ENCODE measurements at regions of chr21 and their contacts with region 1.

Region 1: GRCh38 chr21:15729674-15730483 is at the start of gene USP25:
- DNase-seq: peak; percentile 93 to 97
- ATAC-seq: peak; percentile 93 to 97 (median 96)
- H3K4me3 ChIP-seq: peak within 1 kb of the TSS; percentile 93
- H3K27ac ChIP-seq: peak within 1 kb of the TSS; percentile 97
- H3K4me1 ChIP-seq: peaks cover 13% of the 10 kb centered on the region
- H3K27me3 ChIP-seq: no peaks in the 10 kb centered on the region
- CTCF ChIP-seq: peak; percentile 28
- total RNA-seq, gene USP25: 104 to 149 (median 116) TPM

Region 2: DNA sequence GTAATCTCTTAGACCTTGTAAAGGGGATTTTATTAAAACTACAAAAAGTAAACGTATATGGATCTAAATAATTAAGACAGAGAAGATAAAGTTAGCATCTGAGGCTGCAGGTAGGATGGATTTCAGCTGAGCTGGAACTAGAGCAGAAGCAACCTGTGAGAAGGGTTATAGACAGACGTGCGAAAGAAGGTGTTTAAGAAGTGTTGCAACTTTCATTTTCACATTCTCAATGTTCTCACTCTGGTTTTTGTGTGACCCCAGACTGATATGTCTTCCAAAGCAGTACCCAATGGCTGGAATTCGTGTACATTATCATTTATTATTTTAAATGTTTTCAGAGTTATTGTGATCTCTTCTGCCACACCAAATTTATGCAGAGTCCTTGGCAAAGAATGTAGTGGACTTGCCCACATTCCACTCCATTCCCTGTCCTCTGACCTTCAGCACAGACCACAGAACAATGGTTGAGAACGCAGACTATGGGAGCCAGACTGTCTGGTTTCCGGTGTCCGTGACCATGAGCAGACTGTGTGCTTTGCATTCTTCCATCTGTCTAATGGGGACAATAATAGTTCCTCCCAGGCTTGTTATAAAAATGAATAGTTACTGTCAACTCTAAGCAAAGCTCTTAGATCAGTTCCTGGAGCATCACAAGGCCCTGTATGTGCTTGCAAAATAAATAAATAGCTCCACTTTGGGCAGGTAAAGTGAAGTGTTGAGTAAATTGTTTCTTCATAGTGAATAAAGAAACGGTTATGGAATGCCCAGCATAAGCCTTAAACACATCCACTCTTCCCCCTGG is 1043.2 kb before region 1 on chr21:
- intact Hi-C with region 1: no loop called
- DNase-seq: no peak
- ATAC-seq: no peak
- H3K4me3 ChIP-seq: no peak overlapping the region
- H3K27ac ChIP-seq: no peak overlapping the region
- H3K4me1 ChIP-seq: no peaks in the 10 kb centered on the region
- H3K27me3 ChIP-seq: no peaks in the 10 kb centered on the region
- CTCF ChIP-seq: no peak

Region 3: DNA sequence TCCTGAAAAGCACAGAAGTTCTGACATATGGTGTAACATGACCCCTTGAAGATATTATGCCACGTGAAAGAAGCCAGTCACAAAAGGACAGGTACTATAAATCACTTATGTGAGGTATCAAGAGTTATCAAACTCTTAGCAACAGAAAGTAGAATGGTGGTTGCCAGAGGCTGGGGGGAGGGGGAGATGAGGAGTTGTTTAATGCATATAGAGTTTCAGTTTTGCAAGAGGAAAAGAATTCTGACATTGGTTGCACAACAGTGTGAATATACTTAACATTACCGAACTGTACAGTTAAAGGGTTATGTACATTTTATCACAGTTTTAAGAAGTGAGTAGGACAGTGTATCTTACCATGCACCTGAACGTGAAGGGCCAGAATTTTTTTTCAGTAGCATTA is 79.9 kb after region 1 on chr21:
- intact Hi-C with region 1: loop called in 1 of 2 experiments (anchors 5 kb)
- DNase-seq: peak; percentile 16 to 57
- ATAC-seq: peak; percentile 58 to 67 (median 62)
- H3K4me3 ChIP-seq: peak overlapping the region; percentile 42
- H3K27ac ChIP-seq: peak overlapping the region; percentile 72
- H3K4me1 ChIP-seq: peaks cover 31% of the 10 kb centered on the region
- H3K27me3 ChIP-seq: no peaks in the 10 kb centered on the region
- CTCF ChIP-seq: no peak

Region 4: GRCh38 chr21:15820852-15821379 is 91.0 kb after region 1 on chr21:
- intact Hi-C with region 1: loop called (anchors 1 to 5 kb)
- DNase-seq: no peak
- ATAC-seq: no peak
- H3K4me3 ChIP-seq: no peak overlapping the region
- H3K27ac ChIP-seq: peak overlapping the region; percentile 91
- H3K4me1 ChIP-seq: peaks cover 27% of the 10 kb centered on the region
- H3K27me3 ChIP-seq: no peaks in the 10 kb centered on the region
- CTCF ChIP-seq: no peak

Region 5: DNA sequence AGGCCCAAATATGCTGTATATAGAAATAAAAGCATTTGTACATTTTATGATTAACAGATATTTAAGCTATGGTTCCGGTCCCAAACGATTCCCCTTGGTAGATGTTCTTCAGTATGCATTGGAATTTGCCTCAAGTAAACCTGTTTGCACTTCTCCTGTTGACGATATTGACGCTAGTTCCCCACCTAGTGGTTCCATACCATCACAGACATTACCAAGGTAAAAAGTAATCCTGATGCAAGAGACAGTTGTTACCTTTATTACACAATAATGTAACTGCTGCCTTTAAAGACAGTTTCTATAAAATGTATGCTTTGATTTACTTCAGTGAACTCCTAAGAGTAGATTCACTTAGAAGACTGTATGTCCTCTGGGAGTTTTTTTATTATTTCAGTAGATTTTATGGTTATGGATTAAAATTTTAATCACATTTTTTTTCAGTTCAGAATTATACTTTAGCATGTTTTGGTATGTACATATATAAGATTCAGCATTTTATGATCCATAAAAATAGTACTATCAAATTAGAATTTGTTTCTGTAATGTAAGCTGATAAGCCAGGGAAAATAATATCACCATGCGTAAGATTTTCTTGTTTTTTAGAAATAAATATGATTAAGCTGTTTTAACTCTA is 96.4 kb after region 1 on chr21:
- intact Hi-C with region 1: loop called (anchors 1 to 5 kb)
- DNase-seq: no peak
- ATAC-seq: peak; percentile 71 to 76 (median 76)
- H3K4me3 ChIP-seq: peak overlapping the region; percentile 56
- H3K27ac ChIP-seq: peak overlapping the region; percentile 91
- H3K4me1 ChIP-seq: peaks cover 27% of the 10 kb centered on the region
- H3K27me3 ChIP-seq: no peaks in the 10 kb centered on the region
- CTCF ChIP-seq: peak; percentile 59

Region 6: DNA sequence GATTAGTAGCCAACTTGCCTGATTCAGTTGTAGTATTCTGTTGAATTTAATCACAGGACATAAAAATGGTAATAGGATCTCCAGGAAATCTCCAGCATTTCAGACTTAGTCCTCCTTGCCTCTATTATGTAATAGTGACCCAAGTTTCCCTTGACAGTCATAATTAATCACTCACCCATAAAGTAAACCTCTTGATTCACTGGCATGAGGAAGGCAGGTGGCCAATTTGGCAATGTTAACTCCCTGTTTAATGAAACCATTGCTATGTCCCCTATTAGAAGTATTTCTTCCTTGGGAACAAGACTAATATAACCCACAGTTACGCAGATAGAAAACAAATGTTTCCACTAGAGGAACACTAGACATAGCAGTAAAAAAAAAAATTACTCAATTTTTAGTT is 1178.2 kb after region 1 on chr21:
- intact Hi-C with region 1: no loop called
- DNase-seq: no peak
- ATAC-seq: peak; percentile 52 to 84 (median 76)
- H3K4me3 ChIP-seq: no peak overlapping the region
- H3K27ac ChIP-seq: no peak overlapping the region
- H3K4me1 ChIP-seq: peaks cover 10% of the 10 kb centered on the region
- H3K27me3 ChIP-seq: no peaks in the 10 kb centered on the region
- CTCF ChIP-seq: no peak

Measured in psoas muscle (tissue), 8 donors.